ENCODE measurements at regions of chr6 and their contacts with region 1.

Region 1: DNA sequence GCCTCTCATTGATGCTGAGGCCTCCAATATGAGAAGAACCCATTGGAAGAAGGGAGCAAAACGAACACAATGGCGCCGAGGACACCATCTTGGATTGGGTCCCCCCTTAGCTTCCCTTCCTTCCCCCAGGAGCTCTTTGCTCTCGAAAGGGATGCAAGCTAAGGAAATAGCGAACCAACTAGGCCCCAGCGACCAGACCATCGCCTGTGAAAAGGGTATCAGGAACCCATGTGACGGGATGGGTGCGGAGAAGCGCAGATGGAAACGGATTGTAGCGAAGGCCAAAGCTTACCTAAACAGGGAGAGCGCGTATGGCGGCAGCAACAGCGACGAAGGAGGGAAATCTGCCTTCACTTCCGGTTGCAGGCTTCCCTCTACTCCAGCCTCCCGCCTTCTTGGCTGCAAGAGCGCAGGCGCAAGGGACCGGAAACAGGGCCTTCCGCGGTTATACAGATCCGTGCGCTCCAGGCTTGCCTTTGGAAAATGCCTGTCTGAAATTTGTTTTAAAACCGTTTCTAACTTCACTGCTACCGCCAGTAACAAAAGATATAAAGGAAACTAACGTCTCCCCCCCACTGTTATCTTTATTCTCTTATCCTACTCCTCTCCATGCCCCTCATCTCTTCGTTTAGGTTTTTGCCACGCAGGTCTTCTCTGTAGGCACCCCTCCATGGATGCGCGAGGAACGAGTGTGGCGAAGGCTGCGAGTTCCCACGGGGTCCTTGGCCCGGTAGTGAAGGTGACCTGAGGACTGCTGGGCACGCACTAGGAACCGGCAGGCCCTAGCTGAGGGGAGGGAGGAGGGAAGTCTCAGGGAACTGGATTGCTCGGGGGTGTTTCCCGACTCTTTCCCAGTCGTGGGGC is at the start of gene DDX39B:
- DNase-seq: peak; percentile 99
- H3K4me3 ChIP-seq: peak within 1 kb of the TSS; percentile 65 to 78 (median 70)
- H3K27ac ChIP-seq: peak within 1 kb of the TSS; percentile 92 to 97 (median 96)
- H3K4me1 ChIP-seq: peaks cover 0 to 45% (median 37%) of the 10 kb centered on the region in 4 donors
- H3K27me3 ChIP-seq: no peaks in the 10 kb centered on the region
- CTCF ChIP-seq: no peak
- EP300 ChIP-seq: peak in 1 of 4 donors; percentile 10
- POLR2A ChIP-seq: peak; percentile 64 to 77
- total RNA-seq, gene DDX39B: 211 to 301 (median 239) TPM

Region 2: DNA sequence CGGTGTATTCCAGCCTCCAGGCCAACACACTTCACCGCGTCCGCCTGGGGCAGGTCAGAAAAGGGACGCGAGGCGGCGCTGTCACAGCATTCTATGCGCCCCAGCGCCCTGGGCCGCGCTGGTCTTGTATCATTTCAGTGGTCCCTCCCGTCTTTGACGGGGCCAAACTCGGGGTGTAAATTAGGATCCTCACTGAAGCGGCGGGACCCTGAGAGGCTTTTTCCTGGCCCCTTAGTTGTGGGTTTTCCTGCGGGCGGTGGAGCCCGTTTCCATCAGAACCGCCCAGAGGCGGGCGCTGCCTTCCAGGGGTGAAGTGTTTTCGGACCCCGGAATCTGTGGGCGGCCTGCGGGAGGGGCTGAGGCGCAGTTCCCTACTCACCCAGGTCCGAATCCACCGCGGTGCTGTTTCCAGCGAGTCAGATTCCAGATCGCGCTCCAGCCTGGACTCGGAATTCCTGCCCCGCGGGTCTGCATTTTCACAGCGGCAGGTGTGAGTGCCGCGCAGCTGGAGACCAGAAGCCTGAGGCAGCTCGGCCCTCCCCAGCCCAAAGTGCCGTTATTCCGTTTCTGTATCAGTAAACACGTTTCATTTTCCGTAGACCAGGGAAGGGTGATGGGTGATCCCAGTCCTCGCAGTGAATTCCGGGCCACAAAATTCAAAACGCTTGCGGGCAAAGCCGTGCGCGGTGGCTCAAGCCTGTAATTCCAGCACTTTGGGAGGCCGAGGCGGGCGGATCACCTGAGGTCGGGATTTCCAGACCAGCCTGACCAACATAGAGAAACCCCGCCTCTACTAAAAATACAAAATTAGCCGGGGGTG is 47.8 kb before region 1 on chr6:
- intact Hi-C with region 1: loop called (anchors 2 kb)
- DNase-seq: peak; percentile 84
- H3K4me3 ChIP-seq: peak overlapping the region; percentile 27 to 52 (median 44)
- H3K27ac ChIP-seq: peak overlapping the region; percentile 37 to 76 (median 62)
- H3K4me1 ChIP-seq: peaks cover 0 to 33% (median 25%) of the 10 kb centered on the region in 4 donors
- H3K27me3 ChIP-seq: peaks cover 16 to 67% (median 37%) of the 10 kb centered on the region in 3 donors
- CTCF ChIP-seq: peak; percentile 61 to 76 (median 65)
- EP300 ChIP-seq: no peak
- POLR2A ChIP-seq: no peak

Region 3: GRCh38 chr6:31619805-31620585 is 78.1 kb after region 1 on chr6:
- intact Hi-C with region 1: loop called (anchors 1 kb)
- DNase-seq: peak; percentile 99
- H3K4me3 ChIP-seq: peak overlapping the region; percentile 72 to 87 (median 82)
- H3K27ac ChIP-seq: peak overlapping the region; percentile 97 to 98 (median 98)
- H3K4me1 ChIP-seq: peaks cover 2 to 24% (median 20%) of the 10 kb centered on the region in 4 donors
- H3K27me3 ChIP-seq: no peaks in the 10 kb centered on the region
- CTCF ChIP-seq: no peak
- EP300 ChIP-seq: peak in 1 of 4 donors; percentile 27
- POLR2A ChIP-seq: peak; percentile 80 to 87

Region 4: GRCh38 chr6:31702819-31703522 is 161.1 kb after region 1 on chr6 and contains the start of gene ABHD16A:
- intact Hi-C with region 1: loop called (anchors 10 kb)
- DNase-seq: peak; percentile 100
- H3K4me3 ChIP-seq: peak within 1 kb of the TSS; percentile 66 to 92 (median 80)
- H3K27ac ChIP-seq: peak within 1 kb of the TSS; percentile 94 to 99 (median 97)
- H3K4me1 ChIP-seq: peaks cover 0 to 36% (median 22%) of the 10 kb centered on the region in 4 donors
- H3K27me3 ChIP-seq: no peaks in the 10 kb centered on the region
- CTCF ChIP-seq: no peak
- EP300 ChIP-seq: peak in 2 of 4 donors; percentile 66 to 82
- POLR2A ChIP-seq: peak; percentile 99
- total RNA-seq, gene ABHD16A: 37.8 to 63.4 (median 51.6) TPM

Region 5: GRCh38 chr6:31834434-31835198 is 292.7 kb after region 1 on chr6:
- intact Hi-C with region 1: loop called (anchors 10 kb)
- DNase-seq: peak; percentile 93
- H3K4me3 ChIP-seq: peak overlapping the region; percentile 63 to 85 (median 74)
- H3K27ac ChIP-seq: peak overlapping the region; percentile 90 to 96 (median 94)
- H3K4me1 ChIP-seq: peaks cover 0 to 67% (median 59%) of the 10 kb centered on the region in 4 donors
- H3K27me3 ChIP-seq: no peaks in the 10 kb centered on the region
- CTCF ChIP-seq: no peak
- EP300 ChIP-seq: peak in 2 of 4 donors; percentile 55 to 59
- POLR2A ChIP-seq: peak; percentile 42 to 70

Region 6: GRCh38 chr6:31958741-31959739 is 417.1 kb after region 1 on chr6 and contains the starts of genes NELFE and SKIC2:
- intact Hi-C with region 1: loop called (anchors 10 kb)
- DNase-seq: peak; percentile 99
- H3K4me3 ChIP-seq: peak within 1 kb of the TSS; percentile 65 to 92 (median 83)
- H3K27ac ChIP-seq: peak within 1 kb of the TSS; percentile 77 to 91 (median 88)
- H3K4me1 ChIP-seq: peaks cover 0 to 25% (median 22%) of the 10 kb centered on the region in 4 donors
- H3K27me3 ChIP-seq: no peaks in the 10 kb centered on the region
- CTCF ChIP-seq: no peak
- EP300 ChIP-seq: peak in 1 of 4 donors; percentile 48
- POLR2A ChIP-seq: peak; percentile 46 to 52
- total RNA-seq, gene NELFE: 60.1 to 96.9 (median 75.8) TPM
- total RNA-seq, gene SKIC2: 22.1 to 73.4 (median 33.4) TPM

Region 7: GRCh38 chr6:31971993-31972708 is 430.3 kb after region 1 on chr6 and contains the start of gene DXO:
- intact Hi-C with region 1: no loop called
- DNase-seq: peak; percentile 99
- H3K4me3 ChIP-seq: peak within 1 kb of the TSS; percentile 50 to 81 (median 65)
- H3K27ac ChIP-seq: peak within 1 kb of the TSS; percentile 93 to 96 (median 94)
- H3K4me1 ChIP-seq: peaks cover 0 to 36% (median 29%) of the 10 kb centered on the region in 4 donors
- H3K27me3 ChIP-seq: no peaks in the 10 kb centered on the region
- CTCF ChIP-seq: no peak
- EP300 ChIP-seq: peak in 2 of 4 donors; percentile 47 to 55
- POLR2A ChIP-seq: peak in 1 of 2 donors; percentile 35
- total RNA-seq, gene DXO: 11.4 to 22.7 (median 18.3) TPM

Region 8: GRCh38 chr6:32188381-32189004 is 646.6 kb after region 1 on chr6:
- intact Hi-C with region 1: loop called (anchors 5 kb)
- DNase-seq: peak; percentile 81
- H3K4me3 ChIP-seq: peak overlapping the region; percentile 76 to 98 (median 92)
- H3K27ac ChIP-seq: peak overlapping the region; percentile 93 to 100 (median 96)
- H3K4me1 ChIP-seq: peaks cover 0 to 63% (median 50%) of the 10 kb centered on the region in 4 donors
- H3K27me3 ChIP-seq: no peaks in the 10 kb centered on the region
- CTCF ChIP-seq: no peak
- EP300 ChIP-seq: no peak
- POLR2A ChIP-seq: no peak